ENCODE measurements at regions of chr9 and their contacts with region 1.

Region 1: DNA sequence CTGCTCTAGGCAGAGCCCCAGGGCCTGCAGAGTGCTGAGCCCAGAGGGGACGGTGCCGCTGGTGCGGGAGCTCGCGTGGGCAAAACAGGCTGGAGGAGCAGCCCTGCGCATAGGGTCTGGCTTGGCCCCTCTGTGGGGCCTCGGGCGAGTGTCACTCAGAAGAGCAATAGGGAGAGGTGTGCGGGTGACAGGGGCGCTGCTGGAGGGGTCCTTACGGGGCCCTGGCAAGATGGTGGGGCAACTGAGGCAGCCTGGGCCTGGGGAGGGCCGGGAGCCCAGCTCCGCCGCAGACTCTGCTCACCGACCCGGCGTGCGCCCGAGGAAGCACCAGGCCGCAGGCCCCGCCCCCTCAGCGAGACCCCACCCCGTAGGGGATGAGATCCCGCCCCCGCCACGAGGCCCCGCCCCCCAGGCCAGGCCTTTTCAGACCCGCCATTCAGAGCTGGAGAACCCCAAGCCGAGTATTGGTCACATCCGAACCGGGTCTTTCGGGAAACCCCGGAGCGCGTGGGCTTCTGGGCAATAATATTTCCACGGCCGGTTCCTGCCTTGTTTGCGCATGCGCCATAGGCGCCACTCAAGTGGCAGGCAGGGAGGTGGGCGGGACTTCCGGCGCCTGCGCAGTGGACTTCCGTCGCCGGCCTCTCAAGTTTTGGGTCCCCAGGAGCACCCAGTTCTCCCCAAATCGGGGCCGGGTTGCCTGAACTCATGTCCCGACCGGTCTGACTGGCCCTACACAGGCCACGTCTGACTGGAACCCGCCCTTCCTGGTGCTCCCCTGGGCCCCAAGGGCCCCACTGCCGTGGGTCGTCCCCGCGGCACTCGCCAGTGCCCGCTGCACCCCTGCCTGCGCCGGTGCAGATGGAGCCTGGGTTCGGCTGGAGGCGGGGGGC is 1.3 kb upstream of the RNF208 start:
- DNase-seq: peak; percentile 99
- H3K4me3 ChIP-seq: peak overlapping the region; percentile 69 to 92
- H3K27ac ChIP-seq: peak overlapping the region; percentile 75 to 86
- H3K4me1 ChIP-seq: peaks cover 5 to 41% of the 10 kb centered on the region in 2 experiments; a peak in 1 of 4 replicates
- H3K27me3 ChIP-seq: no peaks in the 10 kb centered on the region
- CTCF ChIP-seq: no peak
- EP300 ChIP-seq: no peak
- RAD21 ChIP-seq: no peak

Region 2: GRCh38 chr9:137070201-137070905 is 153.0 kb before region 1 on chr9 and contains the start of gene SAPCD2:
- CTCF ChIA-PET with region 1: interaction called, 18 read pairs
- POLR2A ChIA-PET with region 1: no interaction called
- DNase-seq: peak; percentile 95
- H3K4me3 ChIP-seq: peak within 1 kb of the TSS; percentile 53 to 57
- H3K27ac ChIP-seq: peak within 1 kb of the TSS in 1 of 2 experiments; percentile 80; a peak in 2 of 4 replicates
- H3K4me1 ChIP-seq: peaks cover 0 to 29% of the 10 kb centered on the region in 2 experiments; a peak in 1 of 4 replicates
- H3K27me3 ChIP-seq: no peaks in the 10 kb centered on the region
- CTCF ChIP-seq: no peak
- EP300 ChIP-seq: no peak
- RAD21 ChIP-seq: no peak
- polyA plus RNA-seq, gene SAPCD2: 4.6 and 6.0 TPM in 2 replicates

Region 3: DNA sequence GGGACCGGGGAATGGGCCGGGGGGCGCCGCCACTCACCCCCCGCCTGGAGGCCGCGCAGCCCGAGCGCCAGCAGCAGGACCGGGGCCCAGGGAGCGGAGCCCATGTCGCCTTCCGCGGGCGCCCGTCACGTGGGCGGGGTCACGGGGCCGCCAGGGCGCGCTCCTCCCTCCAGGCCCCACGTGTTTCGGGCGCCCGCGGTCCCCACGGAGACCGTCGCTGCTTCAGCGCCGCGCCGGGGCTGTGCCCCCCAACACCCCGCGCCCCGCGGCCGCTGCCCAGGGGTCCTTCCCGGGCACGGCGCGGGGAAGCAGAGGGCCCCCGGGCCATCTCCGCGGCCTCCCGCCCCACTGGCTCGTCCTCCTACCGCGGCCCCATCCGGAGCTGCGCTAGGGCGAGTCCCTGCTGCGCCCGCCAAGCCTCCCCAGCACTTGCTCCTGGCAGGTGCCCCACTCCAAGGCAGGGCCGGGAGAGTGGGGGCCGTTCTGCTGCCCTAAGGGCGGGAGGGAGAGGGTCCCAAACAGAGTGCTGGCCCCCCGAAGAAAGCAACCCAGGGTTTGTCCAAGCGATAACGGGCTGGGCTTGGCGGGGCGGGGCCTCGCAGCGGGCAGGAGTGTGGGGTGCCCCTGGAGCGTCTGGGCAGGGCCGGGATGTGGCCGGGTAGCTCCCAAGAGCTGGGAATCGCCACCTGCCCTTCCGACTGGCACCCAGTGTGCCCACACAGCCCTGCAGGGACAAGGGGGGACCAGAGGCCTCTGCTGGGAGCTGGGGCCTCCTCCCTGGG is 108.5 kb before region 1 on chr9 and contains the start of gene DPP7:
- CTCF ChIA-PET with region 1: interaction called, 40 read pairs
- POLR2A ChIA-PET with region 1: interaction called, 3 read pairs
- DNase-seq: peak; percentile 95
- H3K4me3 ChIP-seq: peak within 1 kb of the TSS; percentile 58 to 65
- H3K27ac ChIP-seq: peak within 1 kb of the TSS in 1 of 2 experiments; percentile 39; a peak in 1 of 4 replicates
- H3K4me1 ChIP-seq: peaks cover 0 to 10% of the 10 kb centered on the region in 2 experiments; a peak in 1 of 4 replicates
- H3K27me3 ChIP-seq: no peaks in the 10 kb centered on the region
- CTCF ChIP-seq: no peak
- EP300 ChIP-seq: no peak
- RAD21 ChIP-seq: no peak
- polyA plus RNA-seq, gene DPP7: 127 and 141 TPM in 2 replicates

Region 4: DNA sequence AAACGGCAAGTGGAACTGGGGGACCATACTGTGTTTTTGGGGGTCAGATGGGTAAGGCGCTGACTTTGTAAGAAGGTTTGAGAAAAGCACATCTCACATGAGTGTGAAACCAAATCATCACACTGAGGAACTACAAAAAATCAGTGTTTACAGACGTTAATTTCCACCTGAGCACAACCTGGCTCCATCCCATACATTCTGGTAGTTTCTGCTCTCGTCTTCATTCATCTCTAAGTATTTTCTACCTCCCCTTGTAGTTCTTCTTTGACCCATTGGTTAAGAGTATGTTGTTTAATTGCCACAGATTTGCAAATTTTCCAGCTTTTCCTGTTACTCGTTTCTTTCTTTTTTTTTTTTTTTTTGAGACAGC is 99.9 kb before region 1 on chr9:
- CTCF ChIA-PET with region 1: interaction called, 40 read pairs
- POLR2A ChIA-PET with region 1: interaction called, 3 read pairs
- DNase-seq: no peak
- H3K4me3 ChIP-seq: no peak overlapping the region
- H3K27ac ChIP-seq: no peak overlapping the region
- H3K4me1 ChIP-seq: peaks cover 3 to 13% of the 10 kb centered on the region in 2 experiments; a peak in 3 of 4 replicates
- H3K27me3 ChIP-seq: no peaks in the 10 kb centered on the region
- CTCF ChIP-seq: no peak
- EP300 ChIP-seq: no peak
- RAD21 ChIP-seq: no peak

Region 5: GRCh38 chr9:137129456-137130175 is 93.7 kb before region 1 on chr9:
- CTCF ChIA-PET with region 1: interaction called, 19 read pairs
- POLR2A ChIA-PET with region 1: interaction called, 12 read pairs
- DNase-seq: peak; percentile 96
- H3K4me3 ChIP-seq: peak overlapping the region; percentile 77 to 89
- H3K27ac ChIP-seq: peak overlapping the region; percentile 56 to 87
- H3K4me1 ChIP-seq: peaks cover 3 to 18% of the 10 kb centered on the region in 2 experiments; a peak in 3 of 4 replicates
- H3K27me3 ChIP-seq: no peaks in the 10 kb centered on the region
- CTCF ChIP-seq: no peak
- EP300 ChIP-seq: no peak
- RAD21 ChIP-seq: no peak

Region 6: GRCh38 chr9:137188490-137189296 is 34.6 kb before region 1 on chr9 and contains the starts of genes ANAPC2 and SSNA1:
- CTCF ChIA-PET with region 1: interaction called, 16 read pairs
- POLR2A ChIA-PET with region 1: interaction called, 6 read pairs
- DNase-seq: peak; percentile 99
- H3K4me3 ChIP-seq: peak within 1 kb of the TSS; percentile 71 to 84
- H3K27ac ChIP-seq: peak within 1 kb of the TSS; percentile 91 to 95
- H3K4me1 ChIP-seq: peaks cover 12 to 33% of the 10 kb centered on the region in 2 experiments; a peak in 3 of 4 replicates
- H3K27me3 ChIP-seq: no peaks in the 10 kb centered on the region
- CTCF ChIP-seq: peak; percentile 47
- EP300 ChIP-seq: no peak; a peak in 1 of 4 replicates
- RAD21 ChIP-seq: peak; percentile 53
- polyA plus RNA-seq, gene ANAPC2: 35.1 and 37.7 TPM in 2 replicates
- polyA plus RNA-seq, gene SSNA1: 100 and 124 TPM in 2 replicates

Measured in SK-N-SH (cell line).